ENCODE measurements at regions of chr2 and their contacts with region 1.

Region 1: DNA sequence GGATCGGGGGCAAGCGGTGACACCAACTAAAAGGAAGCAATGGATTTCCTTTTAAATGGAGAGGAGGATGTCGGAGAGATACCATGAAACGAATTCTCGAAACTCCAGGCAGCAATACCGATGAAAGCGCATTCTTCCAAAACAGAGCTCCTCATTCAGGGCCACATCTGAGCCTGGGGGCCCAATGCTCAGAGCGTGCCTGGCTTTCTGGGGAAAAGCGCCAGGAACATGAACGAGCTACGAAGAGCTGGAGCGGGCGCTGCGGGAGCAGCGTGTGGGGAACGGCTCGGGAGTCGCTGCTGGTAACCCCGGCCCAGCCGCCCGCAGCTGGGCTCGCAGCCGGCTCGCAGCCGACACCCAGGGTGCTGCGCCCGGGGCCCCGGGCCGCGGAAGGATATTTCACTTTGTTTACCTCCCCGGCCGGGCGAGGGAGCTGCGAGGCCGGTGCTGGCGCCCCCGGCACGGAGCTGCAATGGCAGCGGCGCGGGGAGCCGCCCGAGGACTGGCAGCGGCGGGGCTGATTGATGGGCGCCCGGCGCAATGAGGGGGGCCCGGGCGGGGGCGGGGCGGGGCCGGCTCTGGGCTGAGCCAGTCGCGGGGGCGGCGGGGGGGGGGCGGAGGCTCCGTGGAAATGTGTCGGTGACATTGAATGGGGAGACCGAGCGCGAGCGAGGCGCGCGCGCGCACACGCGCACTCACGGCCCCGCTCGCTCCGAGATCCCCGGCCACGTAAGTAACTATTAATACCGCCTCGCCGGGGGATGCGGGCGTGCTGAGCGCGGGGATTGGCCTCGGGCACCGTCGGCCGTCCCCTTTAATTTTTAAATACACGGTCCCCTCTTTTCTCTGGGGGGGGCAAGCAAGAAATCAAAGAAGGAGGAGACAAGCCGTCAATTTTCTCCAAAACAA is at the start of gene TRIB2:
- DNase-seq: peak; percentile 98
- H3K4me3 ChIP-seq: peak within 1 kb of the TSS; percentile 76 to 90 (median 82)
- H3K27ac ChIP-seq: peak within 1 kb of the TSS; percentile 89 to 96 (median 94)
- H3K4me1 ChIP-seq: peaks cover 25 to 57% (median 49%) of the 10 kb centered on the region in 4 donors
- H3K27me3 ChIP-seq: no peaks in the 10 kb centered on the region
- CTCF ChIP-seq: no peak
- EP300 ChIP-seq: no peak
- POLR2A ChIP-seq: peak; percentile 21
- total RNA-seq, gene TRIB2: 31.5 to 52.3 (median 39.2) TPM

Region 2: DNA sequence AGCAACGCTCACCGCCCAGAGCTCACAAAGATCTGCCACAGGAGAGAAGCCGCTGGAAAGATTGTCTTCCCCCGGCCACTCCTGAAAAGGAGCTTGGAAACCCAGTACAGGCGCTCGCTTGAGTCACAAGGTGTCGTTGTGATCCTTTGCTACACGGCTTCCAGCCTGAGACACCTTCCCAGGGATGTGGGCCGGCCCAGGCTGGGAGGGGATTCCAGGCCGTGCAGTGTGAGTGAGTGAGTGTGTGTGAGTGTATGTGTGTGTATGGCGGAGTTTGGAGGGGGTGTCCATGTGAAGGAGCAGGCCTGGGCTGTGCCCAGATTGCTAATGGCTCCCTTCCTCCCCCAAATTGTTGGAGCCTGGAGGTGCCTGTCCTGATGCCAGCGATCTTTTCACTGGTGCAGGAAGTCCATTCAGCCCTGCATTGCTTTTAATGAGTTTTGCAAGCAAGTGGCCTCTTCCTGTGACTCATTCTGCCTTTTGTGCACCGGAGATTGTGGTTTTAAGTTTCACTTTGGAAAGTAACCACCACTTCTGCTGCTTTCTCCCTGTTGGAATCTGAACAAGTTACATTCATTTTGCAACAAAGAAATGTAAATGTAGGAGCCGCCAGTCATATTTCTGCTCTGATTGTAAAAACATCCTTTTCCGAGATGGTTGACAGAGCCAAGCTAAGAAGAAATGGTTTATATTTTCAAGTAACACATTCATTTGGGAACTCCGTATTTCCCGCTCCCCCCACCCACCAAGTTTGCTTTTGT is 886.4 kb before region 1 on chr2:
- intact Hi-C with region 1: loop called (anchors 2 kb)
- DNase-seq: no peak
- H3K4me3 ChIP-seq: peak overlapping the region; percentile 38 to 53 (median 42)
- H3K27ac ChIP-seq: peak overlapping the region; percentile 65 to 83 (median 77)
- H3K4me1 ChIP-seq: peaks cover 21 to 28% (median 25%) of the 10 kb centered on the region in 4 donors
- H3K27me3 ChIP-seq: no peaks in the 10 kb centered on the region
- CTCF ChIP-seq: peak; percentile 25 to 41 (median 36)
- EP300 ChIP-seq: no peak
- POLR2A ChIP-seq: no peak

Region 3: GRCh38 chr2:12303181-12304030 is 413.1 kb before region 1 on chr2:
- intact Hi-C with region 1: loop called (anchors 10 kb)
- DNase-seq: no peak
- H3K4me3 ChIP-seq: no peak overlapping the region
- H3K27ac ChIP-seq: no peak overlapping the region
- H3K4me1 ChIP-seq: peaks cover 6 to 21% (median 20%) of the 10 kb centered on the region in 4 donors
- H3K27me3 ChIP-seq: no peaks in the 10 kb centered on the region
- CTCF ChIP-seq: no peak
- EP300 ChIP-seq: no peak
- POLR2A ChIP-seq: no peak

Region 4: GRCh38 chr2:12416600-12416999 is 299.9 kb before region 1 on chr2:
- intact Hi-C with region 1: loop called (anchors 5 kb)
- DNase-seq: no peak
- H3K4me3 ChIP-seq: no peak overlapping the region
- H3K27ac ChIP-seq: no peak overlapping the region
- H3K4me1 ChIP-seq: peaks cover 0 to 12% (median 0%) of the 10 kb centered on the region in 4 donors
- H3K27me3 ChIP-seq: no peaks in the 10 kb centered on the region
- CTCF ChIP-seq: peak in 2 of 3 experiments; percentile 35 to 54
- EP300 ChIP-seq: no peak
- POLR2A ChIP-seq: no peak

Region 5: DNA sequence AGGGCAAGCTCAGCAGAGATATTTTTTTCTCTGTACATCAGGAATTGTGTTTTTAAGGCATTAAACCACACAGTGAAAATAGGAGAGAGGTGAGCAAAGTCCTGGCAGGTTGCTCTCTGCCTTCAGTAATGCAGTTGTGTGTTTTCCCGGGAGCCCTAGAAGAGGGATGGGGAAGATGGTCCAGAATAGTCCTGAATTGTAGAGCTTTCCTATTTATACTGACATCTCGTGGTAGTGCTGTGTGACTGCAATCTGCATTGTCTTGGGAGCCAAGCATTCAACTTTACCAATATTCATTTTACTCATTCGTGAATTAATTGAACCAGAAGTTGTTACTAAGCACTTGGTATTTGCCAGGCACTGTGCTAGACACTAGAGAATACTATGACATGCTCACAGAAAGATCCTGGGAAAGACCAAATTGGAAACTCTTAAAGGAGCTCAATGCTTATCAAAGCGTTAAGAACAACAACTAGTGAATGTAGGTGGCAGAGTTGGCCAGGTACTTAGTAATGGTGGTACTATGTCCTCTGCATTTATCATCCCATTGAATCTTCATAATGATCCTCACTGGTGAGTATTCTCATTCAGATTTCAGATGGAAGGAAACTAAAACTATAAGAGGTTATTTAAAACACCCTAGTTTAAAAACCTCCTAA is 214.8 kb after region 1 on chr2:
- intact Hi-C with region 1: loop called (anchors 2 kb)
- DNase-seq: no peak
- H3K4me3 ChIP-seq: no peak overlapping the region
- H3K27ac ChIP-seq: no peak overlapping the region
- H3K4me1 ChIP-seq: peaks cover 0 to 16% (median 6%) of the 10 kb centered on the region in 4 donors
- H3K27me3 ChIP-seq: no peaks in the 10 kb centered on the region
- CTCF ChIP-seq: peak; percentile 88 to 97 (median 93)
- EP300 ChIP-seq: no peak
- POLR2A ChIP-seq: no peak